SK-N-SH (cell line): ENCODE measurements at regions of chr13 and their contacts with region 1.

Region 1: GRCh38 chr13:44484562-44485138 is 91.5 kb downstream of the TSC22D1 start:
- DNase-seq: no peak
- H3K4me3 ChIP-seq: peak overlapping the region in 1 of 2 experiments; percentile 18; a peak in 1 of 4 replicates
- H3K27ac ChIP-seq: peak overlapping the region; percentile 56 to 67; a peak in 2 of 4 replicates
- H3K4me1 ChIP-seq: peaks cover 2 to 9% of the 10 kb centered on the region in 2 experiments; a peak in 3 of 4 replicates
- H3K27me3 ChIP-seq: no peaks in the 10 kb centered on the region
- CTCF ChIP-seq: no peak
- EP300 ChIP-seq: no peak
- RAD21 ChIP-seq: no peak

Region 2: GRCh38 chr13:44470638-44471562 is 13.8 kb before region 1 on chr13:
- CTCF ChIA-PET with region 1: interaction called, 23 read pairs
- POLR2A ChIA-PET with region 1: no interaction called
- DNase-seq: no peak
- H3K4me3 ChIP-seq: no peak overlapping the region; a peak in 2 of 4 replicates
- H3K27ac ChIP-seq: peak overlapping the region; percentile 18 to 84
- H3K4me1 ChIP-seq: peaks cover 10 to 41% of the 10 kb centered on the region in 2 experiments; a peak in 3 of 4 replicates
- H3K27me3 ChIP-seq: no peaks in the 10 kb centered on the region
- CTCF ChIP-seq: peak; percentile 61
- EP300 ChIP-seq: no peak
- RAD21 ChIP-seq: peak; percentile 76

Region 3: DNA sequence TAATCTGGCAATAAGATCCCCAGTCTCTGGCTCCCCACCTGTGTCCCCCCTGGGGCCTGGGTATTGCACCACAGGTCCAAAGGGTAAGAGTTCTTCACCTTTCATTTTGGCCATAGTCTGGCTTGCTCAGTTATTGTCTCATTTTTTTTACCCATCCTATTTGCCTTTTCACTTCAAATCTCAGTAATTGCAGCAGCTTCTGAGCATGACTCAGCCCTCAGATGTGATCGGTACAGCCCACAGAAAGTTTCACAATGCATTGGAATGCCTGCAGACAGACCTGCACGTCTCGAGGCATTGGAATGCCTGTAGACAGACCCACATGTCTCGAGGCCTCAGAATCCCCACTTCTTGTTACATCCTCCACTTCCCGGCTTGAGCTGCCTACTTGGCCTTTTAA is 331.0 kb after region 1 on chr13:
- CTCF ChIA-PET with region 1: interaction called, 51 read pairs
- POLR2A ChIA-PET with region 1: interaction called, 4 read pairs
- DNase-seq: no peak
- H3K4me3 ChIP-seq: no peak overlapping the region
- H3K27ac ChIP-seq: peak overlapping the region; percentile 52 to 67
- H3K4me1 ChIP-seq: peaks cover 8 to 49% of the 10 kb centered on the region in 2 experiments
- H3K27me3 ChIP-seq: no peaks in the 10 kb centered on the region
- CTCF ChIP-seq: no peak
- EP300 ChIP-seq: peak; percentile 33 to 77; a peak in 2 of 4 replicates
- RAD21 ChIP-seq: peak; percentile 5; the same call in 1 of the 2 replicates

Region 4: DNA sequence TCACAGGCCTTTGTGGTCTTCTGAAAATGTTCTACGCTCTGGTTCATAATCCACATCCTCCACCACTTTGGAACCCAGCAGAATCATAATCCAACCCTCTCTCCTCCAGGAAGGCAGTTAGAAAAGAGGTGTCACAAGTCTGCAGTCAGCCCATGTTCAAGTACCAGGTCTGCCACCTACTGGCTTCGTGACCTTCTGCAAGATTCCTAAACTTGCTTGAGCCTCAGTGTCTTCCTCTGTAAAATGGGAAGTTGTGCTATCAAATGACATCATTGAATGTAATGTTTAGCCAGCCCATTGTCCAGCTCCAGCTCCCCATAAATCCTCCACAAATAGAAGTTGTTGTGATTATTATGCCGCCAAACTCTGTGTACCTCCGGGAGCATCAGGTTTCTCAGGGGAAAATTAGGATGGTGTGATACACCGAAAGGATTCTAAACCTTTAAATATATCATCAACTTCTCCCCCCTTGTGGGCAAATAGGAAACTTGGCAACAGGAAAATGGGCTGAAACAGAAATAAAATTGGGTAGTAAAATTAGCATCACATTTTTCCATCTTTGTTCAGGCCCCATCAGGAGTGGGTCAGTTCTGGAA is 394.9 kb after region 1 on chr13:
- CTCF ChIA-PET with region 1: interaction called, 10 read pairs
- POLR2A ChIA-PET with region 1: no interaction called
- DNase-seq: peak; percentile 18
- H3K4me3 ChIP-seq: no peak overlapping the region
- H3K27ac ChIP-seq: no peak overlapping the region
- H3K4me1 ChIP-seq: no peaks in the 10 kb centered on the region
- H3K27me3 ChIP-seq: no peaks in the 10 kb centered on the region
- CTCF ChIP-seq: peak; percentile 57
- EP300 ChIP-seq: no peak
- RAD21 ChIP-seq: peak; percentile 63

Region 5: GRCh38 chr13:44969551-44970484 is 485.2 kb after region 1 on chr13:
- CTCF ChIA-PET with region 1: interaction called, 26 read pairs
- POLR2A ChIA-PET with region 1: no interaction called
- DNase-seq: peak; percentile 53
- H3K4me3 ChIP-seq: no peak overlapping the region
- H3K27ac ChIP-seq: peak overlapping the region; percentile 1 to 45; a peak in 2 of 4 replicates
- H3K4me1 ChIP-seq: peaks cover 0 to 17% of the 10 kb centered on the region in 2 experiments; a peak in 2 of 4 replicates
- H3K27me3 ChIP-seq: no peaks in the 10 kb centered on the region
- CTCF ChIP-seq: peak; percentile 89
- EP300 ChIP-seq: no peak
- RAD21 ChIP-seq: peak; percentile 90